ENCODE measurements at regions of chr3 and their contacts with region 1.

Region 1: DNA sequence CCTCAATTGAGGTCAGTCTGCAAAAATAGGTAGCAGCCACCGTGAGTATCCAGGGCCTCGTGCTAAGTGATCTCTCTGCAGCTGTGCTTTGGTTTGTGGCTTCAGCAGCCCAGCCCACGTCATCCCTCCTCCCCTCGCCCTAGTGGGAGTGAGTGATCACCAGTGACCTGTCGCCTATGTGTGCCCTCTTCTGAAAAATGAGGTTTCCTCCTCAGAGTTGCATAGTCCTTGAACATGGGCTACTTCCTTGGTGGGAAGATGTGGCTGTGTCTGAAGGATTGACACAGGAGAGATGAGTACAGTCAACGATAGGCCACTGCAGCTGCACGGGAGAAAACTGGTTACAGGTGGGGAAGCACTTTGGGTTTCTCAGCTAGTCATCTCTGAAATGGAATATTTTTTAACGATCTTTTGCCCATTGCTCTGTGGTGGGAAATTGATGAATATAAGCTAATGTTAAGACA is 144.8 kb upstream of the BHLHE40 start:
- DNase-seq: peak; percentile 84
- H3K4me3 Mint-ChIP-seq: peak overlapping the region; percentile 53
- H3K27ac Mint-ChIP-seq: peak overlapping the region; percentile 96
- H3K4me1 Mint-ChIP-seq: peaks cover 90% of the 10 kb centered on the region
- H3K27me3 Mint-ChIP-seq: no peaks in the 10 kb centered on the region

Region 2: DNA sequence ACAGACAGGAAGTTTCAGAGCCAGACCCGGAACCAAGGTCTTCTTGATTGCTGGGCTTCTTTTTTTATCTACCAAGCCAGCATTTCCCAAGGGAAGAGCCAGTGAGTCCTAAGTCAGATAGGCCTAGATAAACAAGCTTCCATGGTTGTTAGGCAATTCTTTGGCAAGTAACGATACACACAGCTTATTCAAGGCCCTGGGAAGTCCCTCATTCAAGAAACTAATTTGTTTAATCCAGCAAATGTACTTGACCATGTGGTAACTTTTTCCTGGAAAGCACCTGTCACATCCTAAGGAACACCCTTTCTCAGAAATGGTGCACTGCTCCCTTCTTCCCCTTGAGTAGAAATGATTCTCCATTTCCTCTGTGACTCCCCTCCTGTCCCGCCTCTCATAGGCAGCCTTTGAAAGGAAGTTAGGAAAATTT is 131.4 kb before region 1 on chr3:
- CTCF ChIA-PET with region 1: no interaction called
- DNase-seq: no peak
- H3K4me3 Mint-ChIP-seq: no peak overlapping the region
- H3K27ac Mint-ChIP-seq: peak overlapping the region; percentile 42
- H3K4me1 Mint-ChIP-seq: peaks cover 32% of the 10 kb centered on the region
- H3K27me3 Mint-ChIP-seq: no peaks in the 10 kb centered on the region

Region 3: GRCh38 chr3:4845882-4846281 is 11.4 kb after region 1 on chr3:
- CTCF ChIA-PET with region 1: interaction called, 15 read pairs
- DNase-seq: no peak
- H3K4me3 Mint-ChIP-seq: peak overlapping the region; percentile 39
- H3K27ac Mint-ChIP-seq: peak overlapping the region; percentile 90
- H3K4me1 Mint-ChIP-seq: peaks cover 99% of the 10 kb centered on the region
- H3K27me3 Mint-ChIP-seq: no peaks in the 10 kb centered on the region

Region 4: DNA sequence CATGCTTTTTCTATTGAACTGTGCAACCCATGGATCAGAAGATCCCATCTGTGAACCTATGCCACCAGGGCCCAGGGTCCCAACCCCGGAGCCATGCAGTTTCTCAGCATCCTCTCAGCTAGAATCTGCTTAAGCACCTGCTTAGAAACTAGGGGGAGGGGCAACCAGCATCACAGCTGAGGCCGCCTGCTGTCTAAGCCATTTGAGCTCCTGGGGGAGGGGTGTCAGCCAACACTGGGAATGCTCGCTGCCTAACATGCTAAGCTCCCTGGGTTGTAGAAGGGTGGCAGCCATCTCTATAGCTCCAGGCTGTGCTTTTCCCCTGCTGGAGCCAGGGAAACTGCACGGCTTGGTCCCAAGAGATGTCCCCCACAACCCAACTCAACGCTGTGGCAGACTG is 675.9 kb after region 1 on chr3:
- CTCF ChIA-PET with region 1: no interaction called
- DNase-seq: no peak
- H3K4me3 Mint-ChIP-seq: no peak overlapping the region
- H3K27ac Mint-ChIP-seq: no peak overlapping the region
- H3K4me1 Mint-ChIP-seq: no peaks in the 10 kb centered on the region
- H3K27me3 Mint-ChIP-seq: no peaks in the 10 kb centered on the region